ENCODE measurements at regions of chr5 and their contacts with region 1.

Region 1: GRCh38 chr5:71757590-71758543 is 38.8 kb downstream of the CARTPT start:
- DNase-seq: peak; percentile 56
- ATAC-seq: peak; percentile 98 to 100

Region 2: GRCh38 chr5:71461360-71461759 is 296.5 kb before region 1 on chr5:
- intact Hi-C with region 1: no loop called
- DNase-seq: no peak
- ATAC-seq: no peak

Region 3: GRCh38 chr5:71586941-71587765 is 170.7 kb before region 1 on chr5 and contains the start of gene MCCC2:
- intact Hi-C with region 1: loop called in 1 of 2 experiments (anchors 5 kb)
- DNase-seq: peak; percentile 99
- ATAC-seq: peak; percentile 100
- total RNA-seq, gene MCCC2: 52.5 to 54.8 TPM

Measured in left cardiac atrium (tissue), 4 donors.